CD14-positive monocyte (primary cell): ENCODE measurements at regions of chr3 and their contacts with region 1.

Region 1: GRCh38 chr3:51941798-51942602 is at the starts of genes PARP3 and RRP9:
- DNase-seq: peak; percentile 100
- H3K4me3 ChIP-seq: peak within 1 kb of the TSS; percentile 54 to 90 (median 61)
- H3K4me3 Mint-ChIP-seq: peak within 1 kb of the TSS; percentile 86 to 90
- H3K27ac ChIP-seq: peak within 1 kb of the TSS; percentile 58 to 86
- H3K27ac Mint-ChIP-seq: peak within 1 kb of the TSS; percentile 74 to 91 (median 84)
- H3K4me1 ChIP-seq: peaks cover 22 to 27% of the 10 kb centered on the region in 2 donors
- H3K4me1 Mint-ChIP-seq: peaks cover 28% of the 10 kb centered on the region
- H3K27me3 ChIP-seq: no peaks in the 10 kb centered on the region
- H3K27me3 Mint-ChIP-seq: no peaks in the 10 kb centered on the region
- CTCF ChIP-seq: peak; percentile 98
- polyA plus RNA-seq, gene PARP3: 1.2 to 6.9 (median 1.7) TPM
- polyA plus RNA-seq, gene RRP9: 6.7 to 10.4 (median 9.9) TPM

Region 2: DNA sequence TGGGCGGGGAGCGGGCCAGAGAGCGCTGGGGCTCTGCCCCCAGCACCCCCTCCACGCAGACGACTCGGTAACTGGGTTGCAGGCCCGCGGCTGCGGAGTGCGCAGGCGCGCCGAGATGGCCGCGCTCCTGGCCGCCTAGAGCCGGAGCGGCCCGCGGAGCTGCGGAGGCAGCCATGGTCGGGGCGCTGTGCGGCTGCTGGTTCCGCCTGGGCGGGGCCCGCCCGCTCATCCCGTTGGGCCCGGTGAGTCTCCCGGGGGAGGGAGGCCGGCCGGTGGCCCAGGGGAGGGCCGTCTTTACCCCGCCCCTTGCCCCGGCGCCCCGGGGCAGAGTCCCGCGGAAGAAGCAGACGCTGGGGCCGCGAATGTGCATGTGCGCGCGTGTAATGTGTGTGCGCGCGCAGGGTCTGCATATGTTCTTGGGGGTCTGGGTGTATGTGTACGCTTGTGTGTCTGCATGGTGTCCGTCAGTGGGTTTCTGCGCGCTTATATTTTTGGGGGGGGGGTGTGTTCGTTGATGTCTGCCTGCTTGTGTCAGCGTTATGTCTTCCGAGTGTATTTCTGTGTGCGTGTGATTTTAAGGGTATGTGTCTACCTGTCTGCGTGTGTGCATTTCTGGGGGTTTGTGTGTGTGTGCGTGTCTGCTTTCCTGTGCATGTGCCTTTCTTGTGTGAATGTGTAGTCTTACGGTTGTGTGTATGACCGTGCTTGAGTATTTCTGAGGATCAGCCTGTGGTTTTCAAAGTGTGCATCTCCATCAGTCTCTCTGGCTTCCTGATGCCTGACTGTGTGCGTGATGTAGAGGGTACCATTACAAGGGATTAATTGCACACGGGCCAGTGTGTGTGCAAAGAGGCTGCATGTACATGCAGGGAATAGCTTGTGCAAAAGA is 33.2 kb after region 1 on chr3 and contains the start of gene ABHD14A:
- intact Hi-C with region 1: loop called (anchors 2 kb)
- DNase-seq: peak; percentile 60 to 80 (median 75)
- H3K4me3 ChIP-seq: peak within 1 kb of the TSS; percentile 73 to 90 (median 87)
- H3K4me3 Mint-ChIP-seq: peak within 1 kb of the TSS; percentile 94 to 97
- H3K27ac ChIP-seq: peak within 1 kb of the TSS; percentile 29 to 81
- H3K27ac Mint-ChIP-seq: peak within 1 kb of the TSS; percentile 50 to 94 (median 87)
- H3K4me1 ChIP-seq: peaks cover 26 to 31% of the 10 kb centered on the region in 2 donors
- H3K4me1 Mint-ChIP-seq: peaks cover 32% of the 10 kb centered on the region
- H3K27me3 ChIP-seq: no peaks in the 10 kb centered on the region
- H3K27me3 Mint-ChIP-seq: peaks cover 0 to 4% (median 4%) of the 10 kb centered on the region in 3 donors
- CTCF ChIP-seq: no peak
- polyA plus RNA-seq, gene ABHD14A: 6.9 to 13.2 (median 11.7) TPM

Region 3: GRCh38 chr3:51995346-51996163 is 53.6 kb after region 1 on chr3 and contains the start of gene RPL29:
- intact Hi-C with region 1: loop called in 1 of 2 experiments (anchors 2 kb)
- DNase-seq: peak; percentile 93 to 94 (median 93)
- H3K4me3 ChIP-seq: peak within 1 kb of the TSS; percentile 87 to 94 (median 93)
- H3K4me3 Mint-ChIP-seq: peak within 1 kb of the TSS; percentile 100
- H3K27ac ChIP-seq: peak within 1 kb of the TSS; percentile 88 to 89
- H3K27ac Mint-ChIP-seq: peak within 1 kb of the TSS; percentile 98 to 100 (median 99)
- H3K4me1 ChIP-seq: peaks cover 12 to 14% of the 10 kb centered on the region in 2 donors
- H3K4me1 Mint-ChIP-seq: peaks cover 23% of the 10 kb centered on the region
- H3K27me3 ChIP-seq: no peaks in the 10 kb centered on the region
- H3K27me3 Mint-ChIP-seq: peaks cover 0 to 3% (median 2%) of the 10 kb centered on the region in 3 donors
- CTCF ChIP-seq: no peak
- polyA plus RNA-seq, gene RPL29: 753 to 2,360 (median 856) TPM

Region 4: DNA sequence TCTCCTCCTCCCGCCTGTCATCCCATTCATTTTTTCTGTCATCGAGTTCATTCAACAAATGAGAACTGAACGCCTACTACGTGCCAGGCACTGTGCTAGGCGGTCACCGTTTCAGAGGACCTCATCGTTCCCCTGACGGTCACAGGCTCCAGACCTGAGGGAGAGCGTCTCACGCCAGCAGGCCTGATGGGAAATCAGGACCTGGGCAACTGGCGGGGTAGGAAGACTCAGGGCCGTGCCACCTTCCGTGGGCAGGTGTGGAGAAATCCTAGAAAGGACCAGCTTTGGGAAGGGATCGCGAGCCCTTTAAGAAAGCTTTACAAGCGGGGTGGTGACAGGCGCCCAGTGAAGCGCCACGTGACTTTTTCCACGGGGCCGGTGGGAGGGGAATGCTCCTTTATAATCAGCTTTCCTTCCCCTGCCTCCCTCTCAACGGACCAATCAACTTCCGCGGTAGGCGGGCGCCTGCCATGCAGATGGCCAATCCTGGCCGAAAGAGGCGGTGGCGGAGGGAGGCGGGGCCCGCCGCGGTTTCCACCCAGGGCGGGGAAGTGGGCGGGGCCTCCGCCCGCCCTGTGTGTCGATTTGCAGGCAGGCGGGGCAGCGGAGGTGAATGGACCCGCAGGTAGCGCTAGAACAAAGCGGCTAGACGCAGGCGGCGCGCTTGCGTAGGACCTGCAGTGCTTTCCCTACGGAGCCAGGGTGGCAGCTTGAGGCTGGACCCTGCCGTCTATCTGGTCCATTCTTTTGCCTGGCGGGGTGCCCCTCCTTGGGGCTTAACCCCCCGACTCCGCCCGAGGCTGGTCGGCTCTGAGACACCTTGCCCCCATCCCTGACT is 115.2 kb after region 1 on chr3:
- intact Hi-C with region 1: loop called in 1 of 2 experiments (anchors 5 kb)
- DNase-seq: peak; percentile 97 to 99 (median 98)
- H3K4me3 ChIP-seq: peak overlapping the region; percentile 55 to 89 (median 65)
- H3K4me3 Mint-ChIP-seq: peak overlapping the region; percentile 85 to 92
- H3K27ac ChIP-seq: peak overlapping the region; percentile 88 to 92
- H3K27ac Mint-ChIP-seq: peak overlapping the region; percentile 96 to 97 (median 96)
- H3K4me1 ChIP-seq: peaks cover 54 to 60% of the 10 kb centered on the region in 2 donors
- H3K4me1 Mint-ChIP-seq: peaks cover 53% of the 10 kb centered on the region
- H3K27me3 ChIP-seq: no peaks in the 10 kb centered on the region
- H3K27me3 Mint-ChIP-seq: peaks cover 0 to 4% (median 0%) of the 10 kb centered on the region in 3 donors
- CTCF ChIP-seq: no peak

Region 5: GRCh38 chr3:52123106-52123725 is 181.2 kb after region 1 on chr3:
- intact Hi-C with region 1: loop called (anchors 5 kb)
- DNase-seq: peak; percentile 66 to 78 (median 73)
- H3K4me3 ChIP-seq: peak overlapping the region in 1 of 3 experiments; percentile 61
- H3K4me3 Mint-ChIP-seq: no peak overlapping the region
- H3K27ac ChIP-seq: peak overlapping the region in 1 of 2 donors; percentile 85
- H3K27ac Mint-ChIP-seq: peak overlapping the region in 5 of 7 donors; percentile 49 to 94 (median 82)
- H3K4me1 ChIP-seq: peaks cover 55 to 57% of the 10 kb centered on the region in 2 donors
- H3K4me1 Mint-ChIP-seq: peaks cover 57% of the 10 kb centered on the region
- H3K27me3 ChIP-seq: no peaks in the 10 kb centered on the region
- H3K27me3 Mint-ChIP-seq: no peaks in the 10 kb centered on the region
- CTCF ChIP-seq: peak; percentile 96

Region 6: GRCh38 chr3:52144034-52144795 is 202.2 kb after region 1 on chr3:
- intact Hi-C with region 1: loop called (anchors 5 kb)
- DNase-seq: peak; percentile 68 to 81 (median 76)
- H3K4me3 ChIP-seq: no peak overlapping the region
- H3K4me3 Mint-ChIP-seq: no peak overlapping the region
- H3K27ac ChIP-seq: peak overlapping the region in 1 of 2 donors; percentile 33
- H3K27ac Mint-ChIP-seq: peak overlapping the region in 4 of 7 donors; percentile 7 to 75 (median 23)
- H3K4me1 ChIP-seq: peaks cover 0 to 4% of the 10 kb centered on the region in 2 donors
- H3K4me1 Mint-ChIP-seq: peaks cover 6% of the 10 kb centered on the region
- H3K27me3 ChIP-seq: no peaks in the 10 kb centered on the region
- H3K27me3 Mint-ChIP-seq: no peaks in the 10 kb centered on the region
- CTCF ChIP-seq: peak; percentile 97